Activated CD4-positive, alpha-beta memory T cell treated with anti-CD3 and anti-CD28 coated beads, Interleukin-2, amount 10 ng/mL, durations not matched to agents 7 days and 5 days (primary cell): ENCODE measurements at regions of chr15 and their contacts with region 1.

Region 1: GRCh38 chr15:48810414-48811317 is at the start of gene CEP152:
- DNase-seq: peak; percentile 99
- H3K4me3 Mint-ChIP-seq: peak within 1 kb of the TSS; percentile 84
- H3K27ac Mint-ChIP-seq: peak within 1 kb of the TSS; percentile 93
- H3K4me1 Mint-ChIP-seq: peaks cover 41% of the 10 kb centered on the region
- H3K27me3 Mint-ChIP-seq: peaks cover 15% of the 10 kb centered on the region
- total RNA-seq, gene CEP152: 41.5 to 43.1 TPM

Region 2: DNA sequence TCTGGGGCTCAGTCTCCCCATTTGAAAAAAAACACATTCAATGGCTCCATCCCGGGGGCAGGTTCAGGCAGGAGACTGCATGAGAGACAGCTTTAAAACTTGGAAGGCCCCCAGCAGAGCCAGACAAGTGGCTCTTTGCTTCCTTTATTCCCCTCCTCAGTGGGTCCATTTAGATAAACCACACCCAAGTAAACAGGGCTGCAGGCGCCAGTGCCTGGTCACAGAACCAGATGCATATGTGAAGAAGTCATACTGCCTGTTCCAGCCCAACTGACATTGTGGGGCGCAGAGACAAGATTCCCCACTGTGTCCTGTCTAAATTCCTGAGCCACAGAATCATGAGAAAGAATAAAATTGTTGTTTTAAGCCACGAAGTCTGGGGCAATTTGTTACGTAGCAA is 174.2 kb before region 1 on chr15:
- CTCF ChIA-PET with region 1: no interaction called
- POLR2A ChIA-PET with region 1: no interaction called
- DNase-seq: no peak
- H3K4me3 Mint-ChIP-seq: no peak overlapping the region
- H3K27ac Mint-ChIP-seq: no peak overlapping the region
- H3K4me1 Mint-ChIP-seq: no peaks in the 10 kb centered on the region
- H3K27me3 Mint-ChIP-seq: peaks cover 9% of the 10 kb centered on the region

Region 3: DNA sequence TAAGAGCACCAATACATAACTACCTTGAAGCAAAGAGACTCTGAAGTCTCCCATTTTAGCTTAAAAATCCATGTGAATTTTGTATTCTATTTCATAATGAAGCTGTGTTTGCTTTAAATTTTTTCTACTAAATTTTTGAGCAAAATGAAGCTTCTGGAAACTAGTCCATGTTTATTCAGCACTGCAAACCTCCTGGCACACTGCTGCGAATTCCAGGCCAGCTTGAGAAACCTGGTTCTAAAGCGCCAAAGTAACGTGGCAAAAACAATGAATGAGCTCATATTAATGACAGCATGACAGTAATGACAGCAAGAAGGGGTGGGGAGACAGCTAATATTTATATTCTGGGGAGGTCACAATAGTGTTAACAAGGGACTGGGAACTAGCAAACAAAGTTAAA is 25.5 kb before region 1 on chr15:
- CTCF ChIA-PET with region 1: interaction called, 4 read pairs
- POLR2A ChIA-PET with region 1: interaction called, 10 read pairs
- DNase-seq: no peak
- H3K4me3 Mint-ChIP-seq: no peak overlapping the region
- H3K27ac Mint-ChIP-seq: no peak overlapping the region
- H3K4me1 Mint-ChIP-seq: no peaks in the 10 kb centered on the region
- H3K27me3 Mint-ChIP-seq: no peaks in the 10 kb centered on the region

Region 4: GRCh38 chr15:48896869-48897814 is 86.5 kb after region 1 on chr15:
- CTCF ChIA-PET with region 1: no interaction called
- POLR2A ChIA-PET with region 1: no interaction called
- DNase-seq: no peak
- H3K4me3 Mint-ChIP-seq: no peak overlapping the region
- H3K27ac Mint-ChIP-seq: no peak overlapping the region
- H3K4me1 Mint-ChIP-seq: peaks cover 13% of the 10 kb centered on the region
- H3K27me3 Mint-ChIP-seq: peaks cover 29% of the 10 kb centered on the region